SK-N-SH (cell line): ENCODE measurements at regions of chr10 and their contacts with region 1.

Region 1: GRCh38 chr10:102615361-102615760 is 28.9 kb upstream of the TRIM8 start:
- DNase-seq: peak; percentile 70
- H3K4me3 ChIP-seq: no peak overlapping the region
- H3K27ac ChIP-seq: peak overlapping the region in 1 of 2 experiments; percentile 36; a peak in 1 of 4 replicates
- H3K4me1 ChIP-seq: peaks cover 0 to 40% of the 10 kb centered on the region in 2 experiments; a peak in 1 of 4 replicates
- H3K27me3 ChIP-seq: no peaks in the 10 kb centered on the region
- CTCF ChIP-seq: peak; percentile 53
- EP300 ChIP-seq: no peak
- RAD21 ChIP-seq: peak; percentile 44

Region 2: GRCh38 chr10:102596506-102596971 is 18.8 kb before region 1 on chr10:
- CTCF ChIA-PET with region 1: interaction called, 14 read pairs
- POLR2A ChIA-PET with region 1: no interaction called
- DNase-seq: peak; percentile 76
- H3K4me3 ChIP-seq: no peak overlapping the region; a peak in 1 of 4 replicates
- H3K27ac ChIP-seq: no peak overlapping the region; a peak in 1 of 4 replicates
- H3K4me1 ChIP-seq: peaks cover 3 to 5% of the 10 kb centered on the region in 2 experiments; a peak in 2 of 4 replicates
- H3K27me3 ChIP-seq: no peaks in the 10 kb centered on the region
- CTCF ChIP-seq: peak; percentile 69
- EP300 ChIP-seq: no peak
- RAD21 ChIP-seq: peak; percentile 78